ENCODE measurements at regions of chr16 and their contacts with region 1.

Region 1: GRCh38 chr16:11255737-11256660 is at the start of gene SOCS1:
- DNase-seq: peak; percentile 86 to 95
- ATAC-seq: peak; percentile 61 to 86 (median 72)
- H3K4me3 ChIP-seq: peak within 1 kb of the TSS; percentile 73
- H3K4me3 Mint-ChIP-seq: peak within 1 kb of the TSS; percentile 98
- H3K27ac ChIP-seq: peak within 1 kb of the TSS; percentile 87
- H3K27ac Mint-ChIP-seq: peak within 1 kb of the TSS; percentile 93 to 96
- H3K4me1 ChIP-seq: peaks cover 66% of the 10 kb centered on the region
- H3K4me1 Mint-ChIP-seq: peaks cover 39 to 54% of the 10 kb centered on the region in 2 donors
- H3K27me3 ChIP-seq: no peaks in the 10 kb centered on the region
- H3K27me3 Mint-ChIP-seq: no peaks in the 10 kb centered on the region
- CTCF ChIP-seq: peak; percentile 91
- total RNA-seq, gene SOCS1: 21.7 to 74.7 (median 27.2) TPM

Region 2: GRCh38 chr16:10971560-10971961 is 284.4 kb before region 1 on chr16:
- intact Hi-C with region 1: loop called (anchors 1 kb)
- DNase-seq: peak in 1 of 2 donors; percentile 80
- ATAC-seq: peak; percentile 46 to 57 (median 53)
- H3K4me3 ChIP-seq: no peak overlapping the region
- H3K4me3 Mint-ChIP-seq: no peak overlapping the region
- H3K27ac ChIP-seq: no peak overlapping the region
- H3K27ac Mint-ChIP-seq: no peak overlapping the region
- H3K4me1 ChIP-seq: no peaks in the 10 kb centered on the region
- H3K4me1 Mint-ChIP-seq: no peaks in the 10 kb centered on the region
- H3K27me3 ChIP-seq: no peaks in the 10 kb centered on the region
- H3K27me3 Mint-ChIP-seq: no peaks in the 10 kb centered on the region
- CTCF ChIP-seq: peak; percentile 83

Region 3: DNA sequence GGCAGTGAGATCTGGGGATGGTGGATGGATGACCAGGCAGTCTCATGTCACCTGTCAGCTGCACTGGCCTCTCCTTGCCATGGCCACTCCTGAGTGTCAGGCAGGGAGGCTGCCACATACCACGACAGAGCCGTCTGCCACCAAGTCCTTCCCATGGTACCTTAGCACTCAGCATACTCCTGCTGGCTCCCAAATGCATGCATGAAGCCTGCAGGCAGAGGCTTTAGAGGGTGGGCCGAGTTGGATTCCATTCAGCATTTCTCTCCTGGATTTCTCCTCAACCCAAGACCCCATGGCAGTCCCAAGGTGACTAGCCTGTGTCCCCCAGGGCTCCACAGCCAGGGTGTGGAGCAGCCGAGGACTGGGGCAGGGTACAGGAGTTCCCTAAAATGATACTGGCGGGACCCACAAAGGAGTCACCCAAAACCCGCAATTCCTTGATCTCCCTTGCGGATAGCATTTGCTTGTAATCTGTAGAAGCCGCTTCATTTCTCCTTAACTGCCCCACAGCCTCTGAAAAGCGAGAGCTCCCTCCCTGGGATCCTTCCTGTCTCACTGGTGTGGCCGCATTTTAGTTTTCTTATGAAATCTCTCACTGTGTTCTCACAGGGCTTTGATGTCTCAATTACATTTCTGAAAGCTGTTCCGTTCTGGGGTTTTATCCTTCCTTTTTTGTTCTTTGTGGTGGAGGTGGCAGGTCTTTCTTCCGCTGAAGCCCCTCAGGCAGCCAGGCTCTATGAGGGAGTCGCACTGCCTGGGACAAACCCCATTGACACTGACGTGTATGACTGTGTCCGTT is 141.4 kb before region 1 on chr16:
- intact Hi-C with region 1: loop called (anchors 10 kb)
- DNase-seq: peak in 1 of 2 donors; percentile 53
- ATAC-seq: peak; percentile 64 to 77 (median 68)
- H3K4me3 ChIP-seq: no peak overlapping the region
- H3K4me3 Mint-ChIP-seq: peak overlapping the region; percentile 81
- H3K27ac ChIP-seq: no peak overlapping the region
- H3K27ac Mint-ChIP-seq: peak overlapping the region; percentile 48 to 66
- H3K4me1 ChIP-seq: peaks cover 33% of the 10 kb centered on the region
- H3K4me1 Mint-ChIP-seq: peaks cover 53% of the 10 kb centered on the region in 2 donors
- H3K27me3 ChIP-seq: no peaks in the 10 kb centered on the region
- H3K27me3 Mint-ChIP-seq: no peaks in the 10 kb centered on the region
- CTCF ChIP-seq: no peak

Region 4: GRCh38 chr16:11232852-11233726 is 22.9 kb before region 1 on chr16:
- intact Hi-C with region 1: loop called (anchors 2 kb)
- DNase-seq: peak; percentile 65 to 91
- ATAC-seq: peak; percentile 70 to 85 (median 79)
- H3K4me3 ChIP-seq: peak overlapping the region; percentile 4
- H3K4me3 Mint-ChIP-seq: peak overlapping the region; percentile 74
- H3K27ac ChIP-seq: peak overlapping the region; percentile 87
- H3K27ac Mint-ChIP-seq: peak overlapping the region; percentile 84 to 92
- H3K4me1 ChIP-seq: peaks cover 68% of the 10 kb centered on the region
- H3K4me1 Mint-ChIP-seq: peaks cover 56 to 59% of the 10 kb centered on the region in 2 donors
- H3K27me3 ChIP-seq: no peaks in the 10 kb centered on the region
- H3K27me3 Mint-ChIP-seq: no peaks in the 10 kb centered on the region
- CTCF ChIP-seq: no peak

Region 5: GRCh38 chr16:11310997-11311561 is 55.1 kb after region 1 on chr16:
- intact Hi-C with region 1: no loop called
- DNase-seq: peak in 1 of 2 donors; percentile 62
- ATAC-seq: peak in 2 of 3 donors; percentile 45 to 46
- H3K4me3 ChIP-seq: no peak overlapping the region
- H3K4me3 Mint-ChIP-seq: no peak overlapping the region
- H3K27ac ChIP-seq: peak overlapping the region; percentile 63
- H3K27ac Mint-ChIP-seq: peak overlapping the region in 1 of 2 donors; percentile 18
- H3K4me1 ChIP-seq: peaks cover 56% of the 10 kb centered on the region
- H3K4me1 Mint-ChIP-seq: peaks cover 11 to 21% of the 10 kb centered on the region in 2 donors
- H3K27me3 ChIP-seq: no peaks in the 10 kb centered on the region
- H3K27me3 Mint-ChIP-seq: peaks cover 0 to 9% of the 10 kb centered on the region in 2 donors
- CTCF ChIP-seq: no peak

Region 6: GRCh38 chr16:11386791-11387546 is 131.0 kb after region 1 on chr16:
- intact Hi-C with region 1: no loop called
- DNase-seq: no peak
- ATAC-seq: peak in 1 of 3 donors; percentile 41
- H3K4me3 ChIP-seq: no peak overlapping the region
- H3K4me3 Mint-ChIP-seq: no peak overlapping the region
- H3K27ac ChIP-seq: no peak overlapping the region
- H3K27ac Mint-ChIP-seq: no peak overlapping the region
- H3K4me1 ChIP-seq: no peaks in the 10 kb centered on the region
- H3K4me1 Mint-ChIP-seq: no peaks in the 10 kb centered on the region
- H3K27me3 ChIP-seq: no peaks in the 10 kb centered on the region
- H3K27me3 Mint-ChIP-seq: peaks cover 0 to 5% of the 10 kb centered on the region in 2 donors
- CTCF ChIP-seq: no peak

Region 7: GRCh38 chr16:11484691-11485258 is 228.8 kb after region 1 on chr16:
- intact Hi-C with region 1: no loop called
- DNase-seq: no peak
- ATAC-seq: no peak
- H3K4me3 ChIP-seq: no peak overlapping the region
- H3K4me3 Mint-ChIP-seq: no peak overlapping the region
- H3K27ac ChIP-seq: no peak overlapping the region
- H3K27ac Mint-ChIP-seq: no peak overlapping the region
- H3K4me1 ChIP-seq: no peaks in the 10 kb centered on the region
- H3K4me1 Mint-ChIP-seq: no peaks in the 10 kb centered on the region
- H3K27me3 ChIP-seq: no peaks in the 10 kb centered on the region
- H3K27me3 Mint-ChIP-seq: no peaks in the 10 kb centered on the region
- CTCF ChIP-seq: no peak

Region 8: DNA sequence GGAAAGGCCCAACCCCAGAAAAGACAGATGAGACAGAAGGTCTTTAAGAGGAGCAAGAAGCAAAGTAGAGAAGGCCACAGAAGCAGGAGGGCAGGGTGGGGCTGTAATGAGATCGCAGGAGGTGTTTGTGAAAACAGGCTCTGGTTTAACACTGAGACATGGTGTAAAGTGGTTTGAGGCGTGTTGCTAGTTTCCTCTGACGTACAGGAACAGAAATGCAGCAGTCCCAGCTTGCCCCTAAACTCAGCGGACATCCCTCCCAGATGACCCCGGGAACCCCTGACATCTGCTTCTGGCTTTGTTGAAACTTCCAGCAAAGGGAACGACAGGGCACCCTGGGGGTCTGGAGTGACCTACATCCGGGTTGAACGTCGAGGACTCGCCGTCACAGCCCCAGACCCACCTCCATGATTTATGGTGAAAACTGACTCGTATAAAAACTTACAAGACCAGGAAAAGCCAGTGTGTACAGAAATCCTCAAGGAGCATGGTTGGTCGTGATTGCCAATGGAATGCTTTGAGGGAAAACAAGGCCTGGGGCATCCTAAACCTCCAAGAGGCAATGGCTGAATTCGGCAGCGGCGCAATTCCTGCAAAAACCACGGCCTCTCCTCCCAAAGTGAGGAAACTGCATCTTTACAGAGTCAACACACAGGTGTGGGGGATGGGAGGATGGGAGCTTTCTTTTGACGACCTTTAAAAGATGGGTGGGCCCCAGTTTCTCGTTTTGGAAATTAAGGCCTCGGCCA is 304.9 kb after region 1 on chr16:
- intact Hi-C with region 1: loop called (anchors 5 kb)
- DNase-seq: peak; percentile 72 to 94
- ATAC-seq: peak; percentile 72 to 91 (median 80)
- H3K4me3 ChIP-seq: peak overlapping the region; percentile 68
- H3K4me3 Mint-ChIP-seq: peak overlapping the region; percentile 97
- H3K27ac ChIP-seq: peak overlapping the region; percentile 100
- H3K27ac Mint-ChIP-seq: peak overlapping the region; percentile 97 to 98
- H3K4me1 ChIP-seq: peaks cover 90% of the 10 kb centered on the region
- H3K4me1 Mint-ChIP-seq: peaks cover 71 to 76% of the 10 kb centered on the region in 2 donors
- H3K27me3 ChIP-seq: no peaks in the 10 kb centered on the region
- H3K27me3 Mint-ChIP-seq: no peaks in the 10 kb centered on the region
- CTCF ChIP-seq: no peak

Measured in natural killer cell (primary cell).